GM13976 (cell line): ENCODE measurements at regions of chr9 and their contacts with region 1.

Region 1: DNA sequence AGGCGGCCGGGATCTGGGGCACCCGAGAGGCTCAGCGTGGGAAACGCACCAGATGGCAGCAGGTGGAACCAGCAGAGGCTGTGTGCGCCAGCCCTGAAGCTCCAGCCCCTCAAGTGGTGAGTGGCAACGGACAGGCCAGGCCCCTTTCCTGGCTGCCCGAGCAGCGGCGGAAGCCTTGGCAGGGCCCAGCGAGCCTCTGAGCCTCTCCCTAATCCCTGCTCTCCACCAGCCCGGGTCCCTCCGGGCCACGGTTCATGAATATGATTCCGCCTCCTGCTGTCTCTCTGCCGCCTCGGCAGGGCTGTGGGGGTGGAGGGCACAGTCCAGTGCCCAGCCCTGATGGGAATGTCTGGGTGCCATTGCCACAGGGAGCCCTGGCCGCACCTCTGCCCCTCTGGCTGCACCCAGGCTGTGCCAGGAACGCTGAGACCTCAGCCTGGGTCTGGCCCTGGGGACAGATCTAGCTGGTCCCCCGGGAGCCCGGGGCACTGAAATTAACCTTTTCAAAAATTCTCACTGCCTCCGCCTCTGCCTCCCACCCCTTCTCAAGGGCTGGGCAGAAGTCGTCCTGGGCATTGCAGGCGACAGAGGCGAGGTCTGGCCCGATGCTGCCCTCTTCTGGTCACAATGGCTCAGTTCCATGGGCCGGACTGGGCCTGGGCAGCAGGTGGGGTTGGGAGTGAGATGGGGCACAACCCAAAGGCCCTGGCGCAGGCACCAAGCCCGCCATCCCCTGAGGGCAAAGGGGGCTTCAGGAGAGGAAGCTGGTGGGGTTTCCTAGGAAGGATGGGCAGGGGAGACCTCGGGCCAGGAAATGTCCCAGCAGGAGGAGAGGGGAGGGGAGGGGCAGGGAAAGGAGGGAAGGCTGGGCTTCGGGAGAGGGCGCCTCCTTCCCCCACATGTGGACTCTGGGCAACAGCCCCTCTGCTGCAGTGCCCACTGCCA is 20.3 kb downstream of the CCDC187 start:
- DNase-seq: peak; percentile 93
- CTCF ChIP-seq: peak; percentile 92

Region 2: DNA sequence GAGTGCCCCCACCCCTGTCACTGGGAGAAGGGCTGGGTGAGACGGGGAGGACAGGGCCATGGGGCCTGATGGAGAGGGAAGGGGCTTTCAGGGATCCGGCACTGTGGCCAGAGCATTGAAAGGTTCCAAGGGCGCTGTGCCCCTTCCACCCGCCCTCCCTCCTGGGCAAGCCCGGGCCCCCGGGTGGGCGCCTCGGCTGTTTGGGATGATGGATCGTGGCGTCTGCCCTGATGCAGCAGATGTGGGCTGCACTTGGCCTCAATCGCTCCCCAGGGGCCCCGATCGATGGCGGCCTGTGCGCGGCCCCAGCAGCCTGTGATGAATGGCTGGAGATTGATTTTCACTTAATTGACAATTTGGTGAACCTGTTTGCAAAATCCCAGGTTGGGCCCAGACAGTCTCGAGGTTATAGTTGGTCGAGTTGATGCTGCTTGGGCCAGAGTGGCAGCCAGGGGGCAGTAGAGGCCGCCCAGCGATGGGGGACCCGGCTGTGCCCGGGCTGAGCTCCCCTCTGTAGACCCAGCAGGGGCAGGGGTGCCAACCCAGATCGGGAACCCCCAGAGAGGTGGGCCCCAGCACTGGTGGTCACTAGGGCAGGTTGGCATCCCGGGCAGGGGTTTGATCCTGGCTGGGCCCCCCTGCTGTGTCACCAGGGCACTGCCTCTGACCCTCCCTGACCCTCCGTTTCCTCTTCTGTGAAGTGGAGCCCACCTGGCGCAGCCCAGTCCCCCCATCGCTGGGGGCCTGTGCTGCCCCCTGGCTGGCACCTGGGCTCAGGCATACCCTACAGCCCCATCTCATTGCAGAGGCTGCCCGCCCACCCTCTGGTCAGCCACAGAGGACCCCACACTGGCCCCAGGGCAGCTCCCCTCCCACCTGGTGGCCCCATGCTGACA is 113.3 kb before region 1 on chr9:
- in situ Hi-C with region 1: loop called (anchors 10 kb)
- DNase-seq: peak; percentile 92
- CTCF ChIP-seq: peak; percentile 69

Region 3: GRCh38 chr9:137049544-137050449 is 766.2 kb after region 1 on chr9:
- in situ Hi-C with region 1: no loop called
- DNase-seq: peak; percentile 79
- CTCF ChIP-seq: peak; percentile 24

Region 4: GRCh38 chr9:137316012-137316976 is 1032.7 kb after region 1 on chr9:
- in situ Hi-C with region 1: no loop called
- DNase-seq: peak; percentile 94
- CTCF ChIP-seq: no peak